ENCODE measurements at regions of chr1 and their contacts with region 1.

Region 1: DNA sequence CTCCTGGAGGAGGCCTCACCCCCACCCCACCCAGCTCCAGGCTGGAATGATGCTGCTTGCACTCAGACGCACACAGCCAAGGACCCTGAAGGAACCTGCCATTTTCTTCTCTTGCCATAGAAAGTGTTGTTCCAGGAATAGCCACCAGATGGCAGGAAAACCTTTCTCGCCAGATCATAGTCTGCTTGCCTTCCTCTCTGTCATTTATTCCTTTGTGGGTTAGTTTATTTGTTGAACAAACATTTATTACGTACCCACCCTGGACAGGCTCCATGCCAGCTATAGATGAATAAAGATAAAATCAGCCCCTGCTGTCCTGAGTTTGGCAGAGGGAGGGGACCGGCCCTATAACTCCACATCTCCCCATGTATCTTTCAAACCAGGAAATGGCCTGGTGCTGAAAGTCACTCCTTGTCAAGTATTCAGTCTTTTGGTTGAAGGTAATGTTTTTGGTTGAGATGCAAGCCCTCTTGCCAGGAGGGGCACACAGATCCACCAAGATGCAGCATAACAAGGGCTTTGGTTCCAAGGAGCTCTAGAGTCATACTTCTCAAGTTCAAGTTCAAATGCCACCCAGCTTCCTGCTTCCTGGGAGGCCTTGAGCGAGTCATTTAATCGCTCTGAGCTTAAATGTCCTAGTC is 7.0 kb upstream of the KCNC4 start:
- DNase-seq: peak; percentile 84
- ATAC-seq: peak; percentile 75
- H3K4me3 Mint-ChIP-seq: no peak overlapping the region
- H3K27ac Mint-ChIP-seq: peak overlapping the region; percentile 91
- H3K4me1 Mint-ChIP-seq: peaks cover 21% of the 10 kb centered on the region
- H3K27me3 Mint-ChIP-seq: no peaks in the 10 kb centered on the region
- CTCF ChIP-seq: peak; percentile 78

Region 2: GRCh38 chr1:109993885-109994284 is 209.3 kb before region 1 on chr1:
- CTCF ChIA-PET with region 1: no interaction called
- POLR2A ChIA-PET with region 1: no interaction called
- intact Hi-C with region 1: no loop called
- DNase-seq: no peak
- ATAC-seq: no peak
- H3K4me3 Mint-ChIP-seq: no peak overlapping the region
- H3K27ac Mint-ChIP-seq: no peak overlapping the region
- H3K4me1 Mint-ChIP-seq: peaks cover 21% of the 10 kb centered on the region
- H3K27me3 Mint-ChIP-seq: no peaks in the 10 kb centered on the region
- CTCF ChIP-seq: no peak

Region 3: GRCh38 chr1:110161877-110162276 is 41.3 kb before region 1 on chr1:
- CTCF ChIA-PET with region 1: no interaction called
- POLR2A ChIA-PET with region 1: no interaction called
- intact Hi-C with region 1: no loop called
- DNase-seq: no peak
- ATAC-seq: no peak
- H3K4me3 Mint-ChIP-seq: no peak overlapping the region
- H3K27ac Mint-ChIP-seq: no peak overlapping the region
- H3K4me1 Mint-ChIP-seq: peaks cover 5% of the 10 kb centered on the region
- H3K27me3 Mint-ChIP-seq: peaks cover 6% of the 10 kb centered on the region
- CTCF ChIP-seq: no peak

Region 4: DNA sequence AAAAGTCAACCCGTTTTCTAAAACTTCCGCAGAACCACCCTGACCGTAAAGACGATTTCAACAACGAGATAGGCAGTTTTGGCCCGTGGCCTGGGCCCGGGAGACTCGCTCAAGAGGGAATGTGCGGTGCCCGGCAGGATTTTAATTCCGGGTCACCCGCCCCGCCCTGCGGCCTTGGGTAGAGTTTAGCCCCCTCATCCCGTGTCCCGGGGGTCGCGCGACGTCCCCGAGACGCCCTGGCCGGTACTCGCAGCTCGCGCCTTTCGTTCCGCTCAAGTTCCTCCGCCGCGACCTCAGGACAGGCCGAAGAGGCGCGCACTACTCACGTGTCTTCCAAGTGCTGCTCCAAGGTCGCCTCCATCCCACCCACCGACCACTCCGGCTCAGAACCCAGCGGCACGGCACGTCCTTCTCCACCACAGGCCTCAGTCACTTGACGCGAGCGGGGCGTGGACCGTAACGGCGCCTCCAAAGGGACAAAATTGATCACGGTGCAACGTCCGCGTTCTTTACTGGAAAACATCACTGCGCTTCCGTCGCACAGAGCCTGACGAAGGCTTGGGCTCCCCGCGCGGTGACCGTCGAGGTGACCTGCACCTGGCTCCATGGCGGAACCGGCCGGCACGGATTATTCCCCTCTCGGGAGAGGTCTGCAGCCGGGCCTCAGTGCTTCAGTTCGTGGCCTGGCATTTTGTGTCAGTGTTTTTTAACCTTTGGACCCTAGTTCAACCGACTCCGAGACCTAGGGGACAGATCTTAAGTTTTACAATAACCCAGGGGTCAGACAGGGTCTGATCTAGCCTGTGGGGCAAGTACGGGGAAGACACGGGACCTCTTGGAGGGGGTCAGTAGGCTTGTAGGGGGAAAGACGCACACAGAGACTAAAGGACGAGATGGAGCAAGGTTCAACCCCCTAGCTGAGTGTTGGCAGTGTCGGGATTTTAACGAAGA is 204.4 kb after region 1 on chr1 and contains the start of gene LAMTOR5:
- CTCF ChIA-PET with region 1: interaction called, 29 read pairs
- POLR2A ChIA-PET with region 1: interaction called, 3 read pairs
- intact Hi-C with region 1: no loop called
- DNase-seq: peak; percentile 96
- ATAC-seq: peak; percentile 94
- H3K4me3 Mint-ChIP-seq: peak within 1 kb of the TSS; percentile 98
- H3K27ac Mint-ChIP-seq: peak within 1 kb of the TSS; percentile 100
- H3K4me1 Mint-ChIP-seq: peaks cover 19% of the 10 kb centered on the region
- H3K27me3 Mint-ChIP-seq: no peaks in the 10 kb centered on the region
- CTCF ChIP-seq: no peak
- total RNA-seq, gene LAMTOR5: 154 to 160 TPM